Activated naive CD4-positive, alpha-beta T cell treated with anti-CD3 and anti-CD28 coated beads for 36 hours (primary cell): ENCODE measurements at regions of chr14 and their contacts with region 1.

Region 1: DNA sequence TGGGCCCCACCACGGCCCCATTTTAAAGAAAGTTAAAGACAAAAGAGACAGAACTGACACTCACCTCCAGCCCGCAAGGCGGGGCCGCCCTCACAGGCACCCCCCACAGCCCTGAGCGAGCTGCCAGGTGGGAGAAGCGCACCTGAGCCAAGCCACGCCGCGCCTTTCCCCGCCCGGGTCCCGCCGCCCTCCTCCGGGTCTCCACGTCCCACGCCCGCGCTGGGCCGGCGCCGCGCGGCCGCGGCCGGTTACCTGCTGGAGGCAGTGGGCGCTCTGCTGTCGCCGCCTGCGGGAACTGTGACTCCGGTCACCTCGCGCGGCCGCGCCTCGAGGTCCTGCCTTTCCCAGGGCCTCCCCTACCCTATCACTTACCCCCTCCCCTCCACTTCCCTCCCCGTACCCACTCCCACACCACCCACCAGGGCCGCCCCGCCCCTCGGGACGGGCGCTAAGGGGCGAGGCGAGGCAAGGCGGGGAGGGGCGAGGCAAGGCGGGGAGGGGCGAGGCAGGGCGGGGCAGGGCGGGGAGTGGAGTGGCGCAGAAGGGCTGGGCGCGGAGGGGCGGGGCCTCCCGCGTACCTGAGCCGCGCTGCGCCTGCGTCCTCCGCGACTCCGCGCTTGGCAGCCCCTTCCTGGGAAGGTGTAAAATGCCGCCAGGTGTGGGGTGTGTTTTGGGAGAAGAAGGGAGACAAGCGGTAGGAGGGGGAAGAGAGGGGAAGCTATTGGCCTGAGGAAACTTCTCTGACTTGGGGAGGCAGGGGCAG is 31.0 kb downstream of the TC2N start:
- DNase-seq: peak; percentile 92
- H3K4me3 Mint-ChIP-seq: peak overlapping the region; percentile 94
- H3K27ac Mint-ChIP-seq: peak overlapping the region; percentile 84
- H3K4me1 Mint-ChIP-seq: peaks cover 70% of the 10 kb centered on the region
- H3K27me3 Mint-ChIP-seq: no peaks in the 10 kb centered on the region

Region 2: GRCh38 chr14:91780452-91780851 is 55.8 kb before region 1 on chr14:
- CTCF ChIA-PET with region 1: no interaction called
- intact Hi-C with region 1: no loop called
- DNase-seq: no peak
- H3K4me3 Mint-ChIP-seq: no peak overlapping the region
- H3K27ac Mint-ChIP-seq: no peak overlapping the region
- H3K4me1 Mint-ChIP-seq: no peaks in the 10 kb centered on the region
- H3K27me3 Mint-ChIP-seq: no peaks in the 10 kb centered on the region

Region 3: GRCh38 chr14:91817566-91818325 is 18.6 kb before region 1 on chr14:
- CTCF ChIA-PET with region 1: interaction called, 6 read pairs
- intact Hi-C with region 1: loop called (anchors 2 kb)
- DNase-seq: peak; percentile 54
- H3K4me3 Mint-ChIP-seq: no peak overlapping the region
- H3K27ac Mint-ChIP-seq: peak overlapping the region; percentile 73
- H3K4me1 Mint-ChIP-seq: peaks cover 52% of the 10 kb centered on the region
- H3K27me3 Mint-ChIP-seq: no peaks in the 10 kb centered on the region

Region 4: DNA sequence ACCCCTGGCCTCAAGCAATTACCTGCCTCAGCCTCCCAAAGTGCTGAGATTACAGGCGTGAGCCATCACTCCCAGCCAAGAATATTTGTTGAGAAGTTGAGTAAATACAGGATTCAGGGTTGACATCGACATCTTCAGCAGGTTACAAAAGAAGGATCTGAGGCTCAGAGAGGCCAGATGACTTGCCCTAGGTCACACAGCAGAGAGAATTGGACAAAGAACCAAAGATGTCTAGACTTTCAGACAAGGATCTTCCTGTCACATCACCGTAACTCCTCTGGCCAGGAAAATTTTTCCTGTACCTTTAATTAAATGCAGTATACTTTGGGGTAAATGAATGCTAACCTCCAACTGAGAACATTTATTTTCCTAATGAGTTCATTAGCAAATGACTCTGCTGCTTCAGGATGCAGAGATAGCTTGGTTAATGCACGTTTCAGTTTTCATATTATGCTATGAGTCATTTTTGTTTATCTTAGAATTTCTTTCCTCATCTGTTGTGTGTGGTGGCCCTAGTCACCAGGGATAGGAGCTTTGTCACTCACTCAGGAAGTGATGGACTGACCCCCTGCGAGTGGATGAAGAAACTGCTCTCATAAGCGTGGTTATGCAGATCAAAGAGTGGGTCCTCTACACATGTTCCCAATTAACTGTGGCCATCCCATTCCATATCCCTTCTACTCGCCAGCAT is 22.1 kb after region 1 on chr14:
- CTCF ChIA-PET with region 1: interaction called, 3 read pairs
- intact Hi-C with region 1: loop called (anchors 1 kb)
- DNase-seq: peak; percentile 62
- H3K4me3 Mint-ChIP-seq: peak overlapping the region; percentile 37
- H3K27ac Mint-ChIP-seq: peak overlapping the region; percentile 75
- H3K4me1 Mint-ChIP-seq: peaks cover 86% of the 10 kb centered on the region
- H3K27me3 Mint-ChIP-seq: no peaks in the 10 kb centered on the region

Region 5: GRCh38 chr14:91883753-91884152 is 47.5 kb after region 1 on chr14:
- CTCF ChIA-PET with region 1: no interaction called
- intact Hi-C with region 1: no loop called
- DNase-seq: no peak
- H3K4me3 Mint-ChIP-seq: no peak overlapping the region
- H3K27ac Mint-ChIP-seq: no peak overlapping the region
- H3K4me1 Mint-ChIP-seq: peaks cover 27% of the 10 kb centered on the region
- H3K27me3 Mint-ChIP-seq: no peaks in the 10 kb centered on the region